GM10248 (cell line): ENCODE measurements at regions of chr19 and their contacts with region 1.

Region 1: GRCh38 chr19:3429581-3430080 is 50.7 kb downstream of the SMIM24 start:
- DNase-seq: peak; percentile 89
- CTCF ChIP-seq: peak; percentile 96

Region 2: DNA sequence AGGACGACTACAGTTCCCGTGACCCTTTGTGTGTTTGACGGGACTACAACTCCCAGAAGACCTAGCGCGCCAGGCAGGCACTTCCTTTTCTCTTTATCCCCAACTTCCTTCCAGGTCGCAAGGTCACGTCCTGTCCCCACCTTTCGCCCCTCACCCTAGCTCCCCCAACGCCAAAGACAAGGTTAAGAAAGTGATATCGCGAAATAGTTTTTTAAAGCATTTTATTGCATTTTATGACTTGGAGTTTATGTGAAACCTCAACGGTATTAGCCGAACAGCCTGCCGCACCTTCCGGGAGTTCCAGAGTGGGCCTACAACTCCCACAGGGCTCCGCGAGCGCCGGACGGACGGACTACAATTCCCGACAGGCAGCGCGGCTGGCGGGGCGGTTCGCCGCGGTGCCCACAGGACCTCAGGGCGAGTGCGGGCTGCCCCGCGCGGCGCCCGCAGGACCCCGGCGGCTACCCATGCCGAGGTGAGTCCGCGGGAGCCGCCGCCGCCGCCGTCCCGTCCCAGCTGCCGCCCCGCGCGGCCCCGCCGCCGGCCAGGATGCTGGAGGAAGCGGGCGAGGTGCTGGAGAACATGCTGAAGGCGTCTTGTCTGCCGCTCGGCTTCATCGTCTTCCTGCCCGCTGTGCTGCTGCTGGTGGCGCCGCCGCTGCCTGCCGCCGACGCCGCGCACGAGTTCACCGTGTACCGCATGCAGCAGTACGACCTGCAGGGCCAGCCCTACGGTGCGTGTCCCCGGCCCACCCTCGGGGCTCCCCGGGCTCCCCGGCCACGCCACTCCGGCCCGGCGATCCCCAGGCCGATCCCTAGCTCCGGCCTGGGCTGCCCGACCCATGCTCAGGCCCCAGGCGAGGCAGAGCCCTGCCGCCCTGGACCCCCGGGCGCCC is 243.9 kb before region 1 on chr19 and contains the start of gene NCLN:
- CTCF ChIA-PET with region 1: no interaction called
- POLR2A ChIA-PET with region 1: no interaction called
- DNase-seq: peak; percentile 90
- CTCF ChIP-seq: no peak

Region 3: DNA sequence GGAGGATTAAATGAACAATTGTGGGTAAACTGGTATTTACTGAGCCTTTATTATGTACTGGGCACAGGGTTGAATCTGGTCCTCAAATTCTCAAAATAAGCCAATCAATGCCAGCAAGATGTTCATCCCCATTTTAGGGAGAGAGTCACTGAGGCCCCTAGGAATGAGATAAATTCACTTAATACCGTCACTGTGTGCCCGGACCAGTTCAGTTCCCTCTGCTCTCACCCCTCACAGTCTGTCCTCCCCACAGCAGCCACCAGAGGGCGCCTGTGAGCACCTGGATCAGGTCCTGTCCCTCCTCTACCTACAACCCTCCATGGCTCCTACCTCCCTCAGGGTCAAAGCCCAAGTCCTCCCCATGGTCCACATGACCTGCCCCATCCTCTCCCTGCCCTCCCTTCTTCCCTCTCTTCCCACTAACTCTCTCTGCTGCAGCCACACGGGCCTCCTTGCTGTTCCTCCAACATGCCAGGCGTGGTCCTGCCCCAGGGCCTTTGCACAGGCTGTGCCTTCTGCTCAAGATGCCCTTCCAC is 105.2 kb before region 1 on chr19:
- CTCF ChIA-PET with region 1: interaction called, 70 read pairs
- POLR2A ChIA-PET with region 1: no interaction called
- DNase-seq: peak; percentile 73
- CTCF ChIP-seq: peak; percentile 65

Region 4: DNA sequence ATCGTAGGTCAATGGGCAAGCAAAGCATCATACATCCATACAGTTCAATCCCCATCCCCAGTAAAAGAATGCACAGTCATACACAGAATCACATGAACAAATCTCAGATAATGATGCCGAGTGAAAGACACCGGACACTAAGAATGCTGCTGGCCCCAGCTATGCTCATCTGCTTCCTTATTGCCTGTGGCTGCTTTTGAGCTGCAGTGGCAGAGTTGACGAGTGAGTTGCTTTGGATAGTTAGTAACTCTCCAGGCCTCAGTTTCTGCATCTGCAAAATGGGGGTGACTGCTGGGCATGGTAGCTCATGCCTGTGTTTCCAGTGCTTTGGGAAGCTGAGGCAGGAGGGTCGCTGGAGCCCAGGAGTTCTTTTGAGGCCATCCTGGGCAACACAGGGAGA is 76.1 kb before region 1 on chr19:
- CTCF ChIA-PET with region 1: interaction called, 20 read pairs
- POLR2A ChIA-PET with region 1: no interaction called
- DNase-seq: no peak
- CTCF ChIP-seq: no peak

Region 5: DNA sequence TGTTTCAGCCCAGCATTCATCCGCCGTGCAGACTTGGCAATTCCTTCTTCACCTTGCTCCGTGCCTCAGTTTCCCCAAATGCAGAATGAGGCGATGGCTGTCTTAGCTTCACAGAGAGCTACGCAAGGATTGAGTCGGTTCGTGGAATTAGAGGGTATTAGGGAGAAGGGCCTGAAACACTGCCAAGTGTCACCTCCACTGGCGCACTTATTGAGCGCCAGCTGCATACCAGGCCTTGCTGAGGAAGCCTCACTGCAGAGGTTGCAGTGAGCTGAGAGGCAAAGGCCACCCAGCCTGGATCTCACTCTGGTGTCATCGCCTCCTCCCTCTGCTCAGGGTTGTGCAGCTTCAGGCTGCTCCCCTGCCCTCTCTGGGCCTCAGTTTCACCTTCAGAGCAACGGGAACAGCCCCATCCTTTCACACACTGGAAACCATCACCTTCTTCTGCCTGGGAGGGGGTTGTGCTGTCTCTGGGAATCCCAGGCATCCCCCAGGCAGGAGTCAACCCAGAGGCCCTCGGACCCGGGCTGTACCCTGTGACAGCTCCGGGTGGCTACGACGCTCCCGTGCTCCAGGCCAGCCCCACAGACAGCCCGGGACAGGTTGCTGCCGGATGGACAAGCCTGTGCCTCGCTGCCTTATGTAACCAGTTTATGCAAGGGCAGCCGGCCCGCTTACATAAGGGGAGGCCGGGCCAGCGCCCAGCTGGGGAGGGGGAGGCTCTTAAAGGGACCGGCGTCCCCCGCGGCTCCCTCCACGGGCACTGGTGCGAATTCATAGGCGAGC is 31.3 kb before region 1 on chr19:
- CTCF ChIA-PET with region 1: interaction called, 12 read pairs
- POLR2A ChIA-PET with region 1: no interaction called
- DNase-seq: no peak
- CTCF ChIP-seq: no peak

Region 6: DNA sequence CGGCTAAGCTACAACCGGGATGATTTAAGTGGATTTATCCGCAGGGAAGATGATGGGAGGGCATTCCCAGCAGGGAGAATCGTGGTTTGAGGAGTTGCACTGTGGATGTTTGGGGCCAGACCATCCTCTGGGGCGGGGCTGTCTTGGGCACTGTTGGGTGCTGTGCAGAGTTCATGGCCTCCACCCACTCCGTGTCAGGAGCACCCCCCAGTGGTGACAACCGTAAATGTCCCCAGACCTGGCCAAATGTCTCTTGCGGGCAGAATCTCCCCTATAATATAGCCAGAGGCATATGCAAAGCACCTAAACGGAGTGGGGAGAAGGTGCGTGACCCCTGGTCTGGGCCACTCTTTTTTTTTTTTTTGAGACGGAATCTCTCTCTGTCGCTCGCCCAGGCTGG is 10.5 kb after region 1 on chr19:
- CTCF ChIA-PET with region 1: interaction called, 37 read pairs
- POLR2A ChIA-PET with region 1: no interaction called
- DNase-seq: peak; percentile 75
- CTCF ChIP-seq: peak; percentile 42

Region 7: DNA sequence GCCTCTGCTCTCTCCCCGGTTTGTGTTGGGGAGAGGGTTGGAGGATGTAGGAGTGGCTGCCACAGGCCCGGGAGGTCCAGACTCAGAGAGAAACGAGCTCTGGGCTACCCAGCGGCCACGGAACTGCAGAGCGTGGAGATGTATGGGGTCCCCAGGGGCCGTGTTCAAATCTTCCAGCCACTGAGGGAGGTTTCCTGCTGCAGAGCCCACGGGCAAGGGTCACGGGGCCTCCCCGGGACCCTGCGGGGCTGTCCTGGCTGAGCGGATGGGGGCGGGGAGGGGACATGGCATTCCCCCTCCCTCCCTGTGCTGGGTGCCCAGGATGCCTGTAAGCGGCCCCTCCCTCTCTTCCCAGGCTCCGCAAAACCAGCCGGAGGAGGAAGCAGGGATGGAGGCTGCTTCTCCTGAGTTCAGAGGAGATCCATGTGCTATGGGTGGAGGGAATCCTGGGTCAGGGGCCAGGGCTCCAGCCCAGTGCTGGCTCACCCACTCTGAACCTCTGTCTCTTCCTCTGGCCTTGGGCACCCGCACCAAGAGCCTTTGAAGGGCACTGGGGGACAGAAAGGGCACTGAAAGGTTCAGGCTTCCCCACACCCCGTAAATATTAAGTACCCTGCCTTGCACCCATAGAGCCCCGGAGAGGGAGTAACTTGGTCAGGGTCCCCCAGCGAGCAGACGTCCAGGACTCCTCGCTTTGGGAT is 28.0 kb after region 1 on chr19:
- CTCF ChIA-PET with region 1: no interaction called
- POLR2A ChIA-PET with region 1: no interaction called
- DNase-seq: no peak
- CTCF ChIP-seq: no peak